ENCODE measurements at regions of chr18 and their contacts with region 1.

Region 1: DNA sequence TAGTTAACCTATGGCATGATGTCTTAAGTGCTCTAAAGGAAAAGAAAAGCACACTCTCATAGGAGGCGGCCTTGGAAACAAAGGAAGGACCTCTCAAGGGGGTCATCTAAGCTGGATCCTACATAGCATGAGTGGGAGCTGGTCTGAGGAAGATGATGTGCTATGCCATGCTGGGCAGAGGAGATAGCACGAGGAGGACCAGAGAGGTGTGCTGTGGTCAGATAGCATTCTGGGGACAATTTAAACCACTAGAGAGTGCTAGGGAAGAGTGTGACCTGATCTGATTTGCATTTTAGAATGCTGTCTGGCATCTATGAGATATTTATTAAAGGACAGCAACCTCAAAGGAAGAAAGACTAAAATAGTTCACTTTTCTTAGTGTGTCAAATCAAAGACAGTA is 910.1 kb upstream of the CELF4 start:
- DNase-seq: no peak
- ATAC-seq: no peak
- H3K4me3 ChIP-seq: no peak overlapping the region
- H3K27ac ChIP-seq: no peak overlapping the region
- H3K4me1 ChIP-seq: no peaks in the 10 kb centered on the region
- H3K27me3 ChIP-seq: no peaks in the 10 kb centered on the region
- CTCF ChIP-seq: no peak

Region 2: DNA sequence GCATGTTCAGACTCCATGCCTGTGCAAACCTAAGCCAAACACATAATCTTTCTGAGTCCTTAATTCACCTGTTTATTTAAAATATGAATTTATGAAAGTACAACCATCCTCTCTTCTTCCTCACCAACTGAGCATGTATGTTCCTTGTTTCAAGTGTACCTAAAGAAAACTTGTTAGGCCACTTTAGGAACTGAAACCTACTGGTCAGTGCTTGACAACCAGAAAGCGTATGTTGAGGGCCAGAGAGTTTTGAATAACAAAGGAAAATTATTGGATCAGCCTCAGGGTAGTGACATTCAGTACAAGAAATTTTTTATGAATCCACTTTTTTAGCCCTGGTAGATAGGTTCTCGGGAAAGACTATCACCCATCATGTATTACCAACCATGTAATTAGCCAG is 62.5 kb before region 1 on chr18:
- intact Hi-C with region 1: loop called (anchors 10 kb)
- DNase-seq: no peak
- ATAC-seq: peak; percentile 52 to 75
- H3K4me3 ChIP-seq: no peak overlapping the region
- H3K27ac ChIP-seq: no peak overlapping the region
- H3K4me1 ChIP-seq: peaks cover 3% of the 10 kb centered on the region
- H3K27me3 ChIP-seq: no peaks in the 10 kb centered on the region
- CTCF ChIP-seq: no peak

Region 3: GRCh38 chr18:38644875-38645641 is 169.4 kb after region 1 on chr18:
- intact Hi-C with region 1: no loop called
- DNase-seq: no peak
- ATAC-seq: no peak
- H3K4me3 ChIP-seq: no peak overlapping the region
- H3K27ac ChIP-seq: no peak overlapping the region
- H3K4me1 ChIP-seq: no peaks in the 10 kb centered on the region
- H3K27me3 ChIP-seq: no peaks in the 10 kb centered on the region
- CTCF ChIP-seq: no peak

Measured in lower lobe of right lung (tissue), 2 donors.